Posterior vena cava (tissue), 2 donors: ENCODE measurements at regions of chr11 and their contacts with region 1.

Region 1: DNA sequence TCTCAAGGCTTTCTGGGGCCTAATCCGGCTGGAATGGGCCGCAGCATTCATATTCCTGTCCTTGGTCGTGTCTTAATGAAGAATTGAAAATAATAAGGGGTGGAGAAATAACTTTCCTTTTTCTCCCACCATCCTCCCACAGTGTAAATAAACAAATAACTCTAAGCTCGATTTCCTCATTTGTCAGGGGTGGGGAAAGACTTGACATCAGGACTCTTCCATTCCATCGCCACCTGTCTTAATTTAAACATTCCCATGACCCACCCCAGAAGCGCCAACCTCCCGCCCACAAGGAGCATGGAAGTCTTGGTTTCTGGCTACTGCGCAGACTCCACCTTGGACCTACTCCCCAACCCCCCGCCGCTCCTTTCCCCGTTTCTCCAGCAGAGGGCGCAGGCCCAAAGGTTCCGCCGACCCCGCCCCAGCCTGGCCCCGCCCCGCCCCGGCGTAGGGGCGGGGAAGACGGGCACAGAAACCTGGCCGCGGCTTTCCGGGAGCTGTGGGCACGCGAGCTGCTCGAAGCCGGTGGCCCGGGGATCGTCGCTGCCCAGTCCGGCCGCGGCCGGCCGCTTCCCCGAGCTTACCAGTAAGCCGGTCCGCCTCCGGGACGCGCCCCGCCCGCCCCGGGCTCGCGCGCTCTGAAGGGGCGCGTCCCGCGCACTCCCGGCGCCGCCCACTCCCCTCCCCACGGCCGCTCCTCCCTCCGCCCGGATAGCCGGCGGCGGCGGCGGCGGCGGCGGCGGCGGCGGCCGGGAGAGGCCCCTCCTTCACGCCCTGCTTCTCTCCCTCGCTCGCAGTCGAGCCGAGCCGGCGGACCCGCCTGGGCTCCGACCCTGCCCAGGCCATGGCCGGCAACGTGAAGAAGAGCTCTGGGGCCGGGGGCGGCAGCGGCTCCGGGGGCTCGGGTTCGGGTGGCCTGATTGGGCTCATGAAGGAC is at the start of gene CBL:
- DNase-seq: peak; percentile 99
- total RNA-seq, gene CBL: 23.3 to 32.8 TPM

Region 2: GRCh38 chr11:118002541-118003423 is 1203.1 kb before region 1 on chr11:
- intact Hi-C with region 1: no loop called
- DNase-seq: no peak

Region 3: GRCh38 chr11:118476676-118477075 is 729.2 kb before region 1 on chr11:
- intact Hi-C with region 1: no loop called
- DNase-seq: no peak

Region 4: GRCh38 chr11:119181677-119182412 is 24.0 kb before region 1 on chr11:
- intact Hi-C with region 1: loop called in 1 of 2 experiments (anchors 1 kb)
- DNase-seq: no peak

Region 5: GRCh38 chr11:119323538-119324033 is 117.7 kb after region 1 on chr11:
- intact Hi-C with region 1: loop called in 1 of 2 experiments (anchors 5 kb)
- DNase-seq: peak; percentile 88